Calu3 (cell line): ENCODE measurements at regions of chr2 and their contacts with region 1.

Region 1: GRCh38 chr2:220687231-220687843 is 884.8 kb downstream of the EPHA4 start:
- DNase-seq: peak; percentile 75
- H3K4me3 Mint-ChIP-seq: no peak overlapping the region
- H3K27ac Mint-ChIP-seq: no peak overlapping the region
- H3K4me1 Mint-ChIP-seq: peaks cover 6% of the 10 kb centered on the region
- H3K27me3 Mint-ChIP-seq: no peaks in the 10 kb centered on the region
- CTCF ChIP-seq: peak; percentile 79

Region 2: DNA sequence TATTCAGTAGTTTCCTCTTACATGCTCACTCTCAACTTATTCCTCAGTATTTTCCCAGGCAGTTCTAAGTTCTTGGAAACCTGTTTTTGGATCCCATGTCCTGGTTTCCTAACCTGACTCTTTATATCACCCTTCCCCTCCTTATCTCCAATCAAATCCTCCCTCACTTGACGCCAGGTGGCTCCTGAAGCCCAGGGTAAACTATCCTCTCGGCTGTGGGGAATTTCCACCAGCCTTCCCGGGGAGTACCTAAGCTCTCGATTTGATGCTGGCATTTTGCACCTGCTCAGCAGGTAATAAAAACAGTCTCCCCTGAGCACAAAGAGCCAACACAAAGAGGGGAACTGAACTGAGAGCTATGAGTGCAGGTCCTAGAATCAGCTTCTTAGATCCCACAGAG is 521.9 kb before region 1 on chr2:
- CTCF ChIA-PET with region 1: no interaction called
- intact Hi-C with region 1: loop called (anchors 5 kb)
- DNase-seq: peak; percentile 58
- H3K4me3 Mint-ChIP-seq: no peak overlapping the region
- H3K27ac Mint-ChIP-seq: no peak overlapping the region
- H3K4me1 Mint-ChIP-seq: peaks cover 8% of the 10 kb centered on the region
- H3K27me3 Mint-ChIP-seq: no peaks in the 10 kb centered on the region
- CTCF ChIP-seq: peak; percentile 36

Region 3: GRCh38 chr2:220748875-220749479 is 61.6 kb after region 1 on chr2:
- CTCF ChIA-PET with region 1: no interaction called
- intact Hi-C with region 1: no loop called
- DNase-seq: no peak
- H3K4me3 Mint-ChIP-seq: no peak overlapping the region
- H3K27ac Mint-ChIP-seq: no peak overlapping the region
- H3K4me1 Mint-ChIP-seq: no peaks in the 10 kb centered on the region
- H3K27me3 Mint-ChIP-seq: no peaks in the 10 kb centered on the region
- CTCF ChIP-seq: no peak

Region 4: GRCh38 chr2:221102896-221103688 is 415.8 kb after region 1 on chr2:
- CTCF ChIA-PET with region 1: no interaction called
- intact Hi-C with region 1: loop called (anchors 2 kb)
- DNase-seq: no peak
- H3K4me3 Mint-ChIP-seq: no peak overlapping the region
- H3K27ac Mint-ChIP-seq: no peak overlapping the region
- H3K4me1 Mint-ChIP-seq: no peaks in the 10 kb centered on the region
- H3K27me3 Mint-ChIP-seq: no peaks in the 10 kb centered on the region
- CTCF ChIP-seq: no peak

Region 5: DNA sequence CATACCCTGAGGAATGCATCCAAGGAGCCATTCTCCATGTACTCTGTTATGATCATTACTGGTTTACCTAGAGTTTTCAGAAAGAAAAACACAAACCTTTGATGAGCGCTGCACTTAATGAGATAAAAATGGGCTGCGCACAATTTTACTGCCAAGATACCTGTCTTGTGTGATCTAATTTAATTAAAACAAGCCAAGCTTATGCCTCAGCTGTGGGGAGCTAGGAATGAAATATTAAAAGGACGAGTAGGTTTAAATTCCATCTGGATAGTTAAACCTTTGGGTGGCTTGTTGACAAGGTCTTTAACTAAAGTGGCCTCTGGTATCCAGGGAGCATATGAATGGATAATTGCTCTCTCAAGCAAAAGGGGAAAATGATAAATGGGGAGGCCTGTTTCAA is 749.7 kb after region 1 on chr2:
- CTCF ChIA-PET with region 1: no interaction called
- intact Hi-C with region 1: loop called (anchors 5 kb)
- DNase-seq: no peak
- H3K4me3 Mint-ChIP-seq: no peak overlapping the region
- H3K27ac Mint-ChIP-seq: no peak overlapping the region
- H3K4me1 Mint-ChIP-seq: peaks cover 16% of the 10 kb centered on the region
- H3K27me3 Mint-ChIP-seq: no peaks in the 10 kb centered on the region
- CTCF ChIP-seq: no peak